Activated CD4-positive, alpha-beta T cell treated with anti-CD3 and anti-CD28 coated beads for 36 hours (primary cell): ENCODE measurements at regions of chr11 and their contacts with region 1.

Region 1: GRCh38 chr11:117178210-117179034 is at the start of gene SIDT2:
- DNase-seq: peak; percentile 95
- ATAC-seq: peak; percentile 91
- H3K4me3 Mint-ChIP-seq: peak within 1 kb of the TSS; percentile 87
- H3K27ac Mint-ChIP-seq: peak within 1 kb of the TSS; percentile 75
- H3K4me1 Mint-ChIP-seq: peaks cover 33% of the 10 kb centered on the region
- H3K27me3 Mint-ChIP-seq: no peaks in the 10 kb centered on the region
- total RNA-seq, gene SIDT2: 21.5 to 23.7 TPM

Region 2: DNA sequence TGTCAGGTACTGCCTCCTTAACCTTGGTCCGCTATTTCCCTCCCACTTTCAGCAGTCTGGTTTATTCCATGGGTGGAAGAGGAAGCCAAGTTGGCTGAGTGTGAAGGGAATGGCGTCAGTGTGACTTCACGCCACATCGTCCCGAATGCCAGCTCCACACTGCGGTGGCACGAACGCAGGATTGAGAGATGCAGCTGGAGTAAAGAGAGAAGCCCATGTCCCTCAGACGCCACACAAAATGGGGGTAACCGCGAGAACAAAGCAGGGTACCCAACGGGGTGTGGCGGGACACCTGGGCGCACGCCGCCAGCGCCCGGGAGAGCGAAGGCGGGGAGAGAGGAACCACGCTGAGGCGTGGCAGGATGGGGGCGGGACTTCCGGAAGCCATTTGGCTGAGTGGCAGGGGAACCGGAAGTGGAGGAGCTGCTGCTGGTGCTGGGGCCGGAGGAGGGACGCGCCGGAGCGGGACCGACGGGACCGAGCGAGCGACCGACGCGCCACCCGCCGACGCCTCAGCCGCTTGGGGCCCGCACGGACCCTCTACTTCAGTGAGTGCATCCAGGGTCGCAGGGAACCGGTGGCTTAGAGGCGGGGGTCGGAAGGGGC is 34.4 kb before region 1 on chr11 and contains the start of gene PAFAH1B2:
- CTCF ChIA-PET with region 1: interaction called, 35 read pairs
- POLR2A ChIA-PET with region 1: interaction called, 4 read pairs
- intact Hi-C with region 1: loop called (anchors 1 kb)
- DNase-seq: peak; percentile 98
- ATAC-seq: peak; percentile 93
- H3K4me3 Mint-ChIP-seq: peak within 1 kb of the TSS; percentile 99
- H3K27ac Mint-ChIP-seq: peak within 1 kb of the TSS; percentile 94
- H3K4me1 Mint-ChIP-seq: peaks cover 42% of the 10 kb centered on the region
- H3K27me3 Mint-ChIP-seq: peaks cover 3% of the 10 kb centered on the region
- total RNA-seq, gene PAFAH1B2: 44.8 to 57.5 TPM

Region 3: DNA sequence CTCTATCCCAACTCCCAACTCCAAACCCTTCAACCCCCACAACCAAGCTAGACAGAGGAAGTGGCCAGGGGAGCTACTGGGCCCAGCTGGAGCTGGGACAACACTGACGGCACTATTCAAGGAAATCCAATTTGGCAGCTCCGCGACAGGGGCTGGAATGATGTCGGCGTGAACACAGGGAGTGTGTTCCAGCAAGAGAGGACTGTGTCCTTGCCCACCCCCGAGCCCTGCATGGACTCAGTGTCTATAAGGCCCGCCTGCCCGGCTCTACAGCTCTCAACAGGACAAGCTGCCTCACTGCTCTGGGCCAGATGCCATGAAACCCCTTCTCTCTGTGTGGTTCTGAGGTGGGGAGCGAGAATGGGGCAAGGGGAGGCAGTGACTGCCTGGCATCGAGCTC is 42.2 kb after region 1 on chr11:
- CTCF ChIA-PET with region 1: interaction called, 64 read pairs
- POLR2A ChIA-PET with region 1: interaction called, 5 read pairs
- intact Hi-C with region 1: no loop called
- DNase-seq: no peak
- ATAC-seq: no peak
- H3K4me3 Mint-ChIP-seq: no peak overlapping the region
- H3K27ac Mint-ChIP-seq: no peak overlapping the region
- H3K4me1 Mint-ChIP-seq: peaks cover 3% of the 10 kb centered on the region
- H3K27me3 Mint-ChIP-seq: no peaks in the 10 kb centered on the region

Region 4: DNA sequence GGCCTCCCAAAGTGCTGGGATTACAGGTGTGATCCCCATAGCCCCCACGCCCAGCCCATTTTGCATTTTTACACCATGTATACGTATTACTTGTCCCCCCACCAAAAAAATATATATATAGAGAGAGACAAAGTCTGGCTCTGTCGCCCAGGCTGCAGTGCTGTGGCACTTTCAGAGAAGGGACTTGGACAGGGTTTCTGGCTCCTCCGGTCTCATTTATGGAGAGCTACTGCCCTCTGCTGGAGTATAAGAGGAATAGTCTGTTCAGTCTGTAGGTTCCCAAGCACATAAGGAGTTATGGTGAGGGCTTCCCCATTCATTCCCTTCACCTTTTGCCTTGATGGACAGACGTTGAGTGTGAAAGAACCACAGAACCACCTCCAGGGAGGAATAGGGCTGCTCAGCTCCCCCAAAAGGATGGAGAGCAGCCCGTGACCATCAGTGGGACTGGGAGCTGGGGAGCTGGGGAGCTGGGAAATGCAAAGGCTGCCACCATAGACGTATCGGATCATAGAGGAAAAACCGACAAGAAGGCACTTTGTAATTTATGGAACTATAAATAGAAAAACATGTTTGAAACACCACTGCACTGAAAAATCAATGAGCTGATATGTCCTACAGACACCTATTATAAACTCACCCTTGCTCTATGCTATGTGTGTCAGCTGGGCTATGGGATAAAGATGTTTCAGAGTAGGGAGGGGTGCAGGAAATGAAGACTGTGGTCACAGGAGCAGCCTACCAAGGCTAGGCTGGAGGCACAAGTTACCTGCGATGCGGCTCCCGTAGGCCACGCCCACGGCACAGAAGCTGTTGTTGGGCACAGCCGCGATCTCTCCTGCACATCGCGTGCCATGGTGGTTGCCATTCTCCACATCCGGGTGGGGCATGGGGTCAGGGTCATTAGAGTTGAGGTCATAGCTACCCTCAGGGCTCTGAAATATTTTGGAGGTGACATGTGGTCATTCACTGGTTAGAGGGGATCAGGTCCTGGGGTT is 48.3 kb after region 1 on chr11:
- CTCF ChIA-PET with region 1: interaction called, 64 read pairs
- POLR2A ChIA-PET with region 1: interaction called, 7 read pairs
- intact Hi-C with region 1: loop called (anchors 1 kb)
- DNase-seq: peak; percentile 59
- ATAC-seq: peak; percentile 52
- H3K4me3 Mint-ChIP-seq: no peak overlapping the region
- H3K27ac Mint-ChIP-seq: peak overlapping the region; percentile 25
- H3K4me1 Mint-ChIP-seq: peaks cover 30% of the 10 kb centered on the region
- H3K27me3 Mint-ChIP-seq: no peaks in the 10 kb centered on the region

Region 5: GRCh38 chr11:117327567-117328374 is 149.3 kb after region 1 on chr11 and contains the start of gene CEP164:
- CTCF ChIA-PET with region 1: no interaction called
- POLR2A ChIA-PET with region 1: no interaction called
- intact Hi-C with region 1: loop called (anchors 5 to 10 kb)
- DNase-seq: peak; percentile 96
- ATAC-seq: peak; percentile 97
- H3K4me3 Mint-ChIP-seq: no peak within 1 kb of the TSS
- H3K27ac Mint-ChIP-seq: peak within 1 kb of the TSS; percentile 73
- H3K4me1 Mint-ChIP-seq: peaks cover 13% of the 10 kb centered on the region
- H3K27me3 Mint-ChIP-seq: no peaks in the 10 kb centered on the region
- total RNA-seq, gene CEP164: 30.3 to 31.0 TPM

Region 6: DNA sequence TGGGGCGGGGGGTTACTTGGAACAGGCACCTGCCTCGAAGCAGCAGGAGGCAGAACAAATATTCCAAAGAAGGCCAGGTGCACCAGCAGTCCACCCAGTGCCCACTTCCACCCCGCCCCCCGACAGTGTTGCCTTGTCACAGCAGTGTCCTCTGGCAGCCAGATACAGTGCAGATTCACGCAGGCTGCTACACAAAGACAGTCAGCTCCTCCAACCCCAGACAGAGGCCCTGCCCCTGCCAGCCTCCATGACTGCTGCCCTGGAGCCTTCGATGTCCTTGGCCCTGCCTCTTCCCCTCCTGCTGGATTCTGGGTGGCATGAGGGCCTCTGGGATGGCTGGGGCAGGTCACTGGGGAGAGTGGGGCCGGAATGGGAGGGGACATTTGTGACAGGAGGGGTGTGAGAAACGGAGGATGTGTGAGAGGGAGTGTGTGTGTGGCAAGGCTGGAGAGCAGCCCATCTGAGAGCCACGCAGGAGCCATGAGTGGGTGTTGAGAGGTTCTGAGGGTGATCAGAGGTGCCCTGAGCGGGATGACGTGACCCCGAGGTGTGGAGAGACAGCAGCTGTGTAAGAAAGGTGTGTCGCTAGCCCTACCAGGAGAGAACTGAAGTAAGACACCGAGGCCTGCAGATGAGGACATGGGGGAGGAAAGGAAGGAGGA is 322.9 kb after region 1 on chr11:
- CTCF ChIA-PET with region 1: no interaction called
- POLR2A ChIA-PET with region 1: no interaction called
- intact Hi-C with region 1: no loop called
- DNase-seq: no peak
- ATAC-seq: no peak
- H3K4me3 Mint-ChIP-seq: no peak overlapping the region
- H3K27ac Mint-ChIP-seq: no peak overlapping the region
- H3K4me1 Mint-ChIP-seq: no peaks in the 10 kb centered on the region
- H3K27me3 Mint-ChIP-seq: no peaks in the 10 kb centered on the region